Sigmoid colon (tissue), 7 donors: ENCODE measurements at regions of chr7 and their contacts with region 1.

Region 1: GRCh38 chr7:155598810-155599210 is 45.7 kb upstream of the RBM33 start:
- DNase-seq: peak; percentile 84
- H3K4me3 ChIP-seq: no peak overlapping the region
- H3K27ac ChIP-seq: no peak overlapping the region
- H3K4me1 ChIP-seq: peaks cover 0 to 4% (median 2%) of the 10 kb centered on the region in 4 donors
- H3K27me3 ChIP-seq: peaks cover 0 to 47% (median 5%) of the 10 kb centered on the region in 3 donors
- CTCF ChIP-seq: peak; percentile 42 to 97 (median 85)
- EP300 ChIP-seq: no peak
- POLR2A ChIP-seq: no peak

Region 2: GRCh38 chr7:155738652-155739537 is 140.1 kb after region 1 on chr7:
- intact Hi-C with region 1: loop called (anchors 2 kb)
- DNase-seq: peak; percentile 77
- H3K4me3 ChIP-seq: no peak overlapping the region
- H3K27ac ChIP-seq: no peak overlapping the region
- H3K4me1 ChIP-seq: peaks cover 0 to 2% (median 0%) of the 10 kb centered on the region in 4 donors
- H3K27me3 ChIP-seq: no peaks in the 10 kb centered on the region
- CTCF ChIP-seq: peak in 3 of 4 experiments; percentile 30 to 47 (median 36)
- EP300 ChIP-seq: no peak
- POLR2A ChIP-seq: no peak

Region 3: GRCh38 chr7:155763691-155764437 is 165.1 kb after region 1 on chr7:
- intact Hi-C with region 1: loop called (anchors 1 kb)
- DNase-seq: no peak
- H3K4me3 ChIP-seq: no peak overlapping the region
- H3K27ac ChIP-seq: peak overlapping the region in 3 of 4 donors; percentile 49 to 60 (median 56)
- H3K4me1 ChIP-seq: peaks cover 0 to 32% (median 7%) of the 10 kb centered on the region in 4 donors
- H3K27me3 ChIP-seq: no peaks in the 10 kb centered on the region
- CTCF ChIP-seq: no peak
- EP300 ChIP-seq: no peak
- POLR2A ChIP-seq: no peak